Endothelial cell of umbilical vein (primary cell): ENCODE measurements at regions of chr14 and their contacts with region 1.

Region 1: DNA sequence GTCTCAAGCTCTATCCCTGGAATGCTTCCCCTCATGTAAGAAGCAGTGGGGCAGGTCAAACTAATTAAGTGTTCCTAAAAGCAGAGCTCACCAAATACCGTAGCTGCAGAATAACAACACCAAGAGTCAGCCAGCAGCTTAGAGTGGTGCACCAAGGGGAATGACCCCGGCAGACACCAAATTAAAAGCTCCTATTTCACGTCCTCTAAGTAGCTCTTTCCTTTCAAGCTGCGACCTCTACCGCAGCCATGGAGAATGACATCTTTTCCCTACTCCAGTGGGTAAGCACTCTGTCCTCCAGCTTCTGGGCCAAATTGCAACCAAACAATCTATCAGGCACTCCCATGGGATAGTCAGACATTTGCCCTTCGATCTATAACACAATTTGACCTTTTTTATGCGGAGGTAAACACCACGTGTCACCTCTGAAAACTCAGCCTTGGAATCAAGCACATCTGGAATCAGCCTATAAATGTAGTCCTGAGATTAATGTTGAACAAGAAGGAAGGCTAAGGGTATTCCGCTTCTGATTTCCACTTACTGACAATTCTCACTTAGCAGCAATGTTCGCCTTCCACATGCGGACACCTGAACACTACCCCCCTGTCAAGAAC is 67.6 kb upstream of the CDKN3 start:
- DNase-seq: peak; percentile 81
- H3K4me3 ChIP-seq: no peak overlapping the region
- H3K27ac ChIP-seq: peak overlapping the region; percentile 24
- H3K4me1 ChIP-seq: peaks cover 55% of the 10 kb centered on the region
- H3K27me3 ChIP-seq: no peaks in the 10 kb centered on the region
- CTCF ChIP-seq: peak; percentile 72 to 74
- POLR2A ChIP-seq: no peak

Region 2: DNA sequence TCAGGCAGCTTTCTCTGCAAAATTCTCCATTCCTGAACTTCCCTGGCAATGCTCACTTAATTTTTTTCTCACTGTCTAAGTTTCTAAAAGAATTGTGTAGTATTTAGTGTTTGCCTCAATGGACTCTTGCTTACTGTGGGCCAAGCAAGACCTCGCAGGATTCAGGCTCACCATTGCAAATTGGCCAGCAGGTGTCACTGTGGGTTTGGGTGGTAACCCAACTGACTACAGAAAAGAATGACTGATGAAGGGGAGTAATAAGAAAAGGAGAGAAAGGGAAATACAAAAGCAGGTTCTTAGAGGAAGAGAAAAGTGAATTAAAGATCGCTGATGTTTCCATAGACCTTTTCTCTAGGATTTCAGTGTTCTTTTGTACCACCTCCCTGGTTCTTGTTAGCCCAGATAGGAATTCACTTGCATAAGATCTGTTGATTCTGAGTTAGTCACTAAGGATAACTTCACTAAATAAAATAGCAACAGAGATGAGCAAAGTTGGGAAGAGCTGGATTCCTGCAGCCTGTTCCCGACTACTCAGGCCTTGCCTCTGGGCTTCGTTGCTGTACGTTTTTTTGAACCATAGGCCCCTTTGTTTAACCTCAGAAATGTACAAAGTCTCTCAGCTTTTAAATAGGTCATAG is 789.6 kb before region 1 on chr14:
- CTCF ChIA-PET with region 1: interaction called, 30 read pairs
- POLR2A ChIA-PET with region 1: no interaction called
- dilution Hi-C with region 1: loop called (anchors 25 kb)
- intact Hi-C with region 1: loop called (anchors 1 kb)
- DNase-seq: peak; percentile 94
- H3K4me3 ChIP-seq: no peak overlapping the region
- H3K27ac ChIP-seq: no peak overlapping the region
- H3K4me1 ChIP-seq: peaks cover 43% of the 10 kb centered on the region
- H3K27me3 ChIP-seq: no peaks in the 10 kb centered on the region
- CTCF ChIP-seq: peak; percentile 74 to 82
- POLR2A ChIP-seq: no peak

Region 3: DNA sequence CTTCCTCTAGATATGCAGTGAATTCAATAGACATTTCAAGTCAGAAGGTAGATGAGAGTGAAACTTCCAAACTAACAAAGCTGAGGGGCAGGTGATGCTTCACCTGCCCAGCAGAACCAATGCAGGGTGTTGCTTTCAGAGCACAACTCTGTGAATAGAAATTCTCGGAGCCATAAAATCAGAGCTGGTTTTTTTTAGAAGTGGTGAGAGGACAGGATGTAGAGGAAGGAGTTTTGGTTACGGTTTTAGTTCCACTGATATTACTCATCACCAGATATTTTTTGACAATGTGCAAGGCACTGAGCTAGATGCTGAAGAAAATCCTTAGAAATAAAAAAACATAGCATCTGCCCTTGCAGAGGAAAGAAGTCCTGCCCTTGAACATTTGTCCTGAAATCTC is 434.7 kb before region 1 on chr14:
- CTCF ChIA-PET with region 1: interaction called, 6 read pairs
- POLR2A ChIA-PET with region 1: no interaction called
- dilution Hi-C with region 1: no loop called
- intact Hi-C with region 1: loop called (anchors 1 kb)
- DNase-seq: peak; percentile 55
- H3K4me3 ChIP-seq: no peak overlapping the region
- H3K27ac ChIP-seq: peak overlapping the region; percentile 52
- H3K4me1 ChIP-seq: peaks cover 37% of the 10 kb centered on the region
- H3K27me3 ChIP-seq: no peaks in the 10 kb centered on the region
- CTCF ChIP-seq: no peak
- POLR2A ChIP-seq: no peak

Region 4: DNA sequence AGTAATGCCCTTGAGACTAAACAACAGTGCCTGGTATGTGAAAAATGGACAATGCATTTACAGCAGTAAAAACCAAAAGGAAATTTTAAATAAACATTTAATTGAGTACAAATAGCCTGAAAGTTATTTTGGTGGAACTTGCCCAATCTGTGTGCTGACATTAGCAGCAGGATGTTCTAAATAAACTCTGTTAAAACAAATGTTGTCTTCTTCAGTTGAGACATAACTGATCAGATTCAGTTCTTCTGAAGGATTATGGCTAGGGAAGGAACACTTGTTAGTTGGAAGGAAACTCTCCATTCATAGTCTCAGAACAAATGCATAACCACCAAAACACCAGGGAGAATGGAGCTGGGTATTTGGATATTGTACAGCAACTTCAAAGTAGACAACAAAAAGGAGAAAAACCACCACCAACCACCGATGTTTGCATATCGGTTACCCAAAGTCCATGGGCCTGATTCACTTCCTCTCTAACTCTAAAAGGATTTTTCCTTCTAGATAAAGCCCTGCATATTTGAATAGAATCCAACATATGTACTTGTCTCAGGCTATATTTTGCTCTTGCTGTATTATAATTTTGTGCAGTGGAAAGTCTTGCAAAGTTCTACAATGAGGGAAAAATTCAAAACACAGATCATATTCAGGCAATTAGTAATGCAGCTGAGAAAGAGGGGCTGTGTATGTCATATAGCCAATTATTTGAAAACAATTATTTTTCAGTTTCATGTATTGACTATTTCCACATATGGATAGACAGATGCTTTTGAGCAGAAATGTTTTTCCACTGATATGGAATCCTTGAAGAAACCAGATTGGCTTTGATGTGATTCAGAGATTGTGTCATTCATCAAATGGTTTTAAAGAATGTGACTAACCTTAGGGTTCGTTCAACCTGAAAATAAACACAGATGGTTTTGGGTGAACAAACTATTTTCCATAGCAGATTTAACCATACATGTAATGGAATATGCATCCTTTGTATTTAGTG is 220.4 kb before region 1 on chr14:
- CTCF ChIA-PET with region 1: interaction called, 5 read pairs
- POLR2A ChIA-PET with region 1: no interaction called
- dilution Hi-C with region 1: no loop called
- intact Hi-C with region 1: loop called (anchors 2 kb)
- DNase-seq: peak; percentile 94
- H3K4me3 ChIP-seq: peak overlapping the region in 1 of 3 experiments; percentile 17
- H3K27ac ChIP-seq: peak overlapping the region; percentile 96
- H3K4me1 ChIP-seq: peaks cover 44% of the 10 kb centered on the region
- H3K27me3 ChIP-seq: no peaks in the 10 kb centered on the region
- CTCF ChIP-seq: no peak
- POLR2A ChIP-seq: no peak

Region 5: DNA sequence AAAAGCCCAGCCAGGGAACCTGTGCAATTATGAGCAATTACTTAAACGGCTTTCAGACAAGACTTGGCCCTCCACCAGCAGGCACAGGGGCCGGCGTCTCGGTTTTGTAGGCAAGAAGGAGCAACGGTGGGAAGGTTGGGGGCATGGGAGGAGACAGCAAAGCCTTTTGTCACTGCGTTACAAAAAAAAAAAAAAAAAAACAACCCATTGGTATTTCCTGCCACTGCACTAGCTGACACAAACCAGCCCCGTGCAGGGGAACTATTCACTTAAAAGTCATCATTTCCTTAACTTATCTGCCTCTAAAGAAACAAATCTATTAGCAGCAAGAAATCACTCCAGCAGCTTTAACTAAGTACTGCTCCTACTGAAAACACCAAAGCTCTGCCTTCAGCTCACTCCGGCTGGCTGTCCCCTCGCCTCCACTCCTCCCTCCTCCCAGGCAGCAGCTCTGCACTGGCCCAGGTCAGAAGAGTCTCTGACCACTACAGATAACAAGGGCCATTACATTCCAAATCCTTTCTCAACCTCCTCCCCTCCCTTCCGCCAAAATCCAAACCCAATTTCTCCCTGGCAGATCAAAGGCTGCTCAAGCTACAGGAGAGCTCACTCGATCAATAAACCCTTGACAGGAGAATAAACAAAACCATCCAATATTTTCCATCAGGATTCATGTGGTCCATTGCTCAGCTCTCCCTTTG is 37.5 kb before region 1 on chr14:
- CTCF ChIA-PET with region 1: interaction called, 19 read pairs
- POLR2A ChIA-PET with region 1: no interaction called
- dilution Hi-C with region 1: no loop called
- intact Hi-C with region 1: no loop called
- DNase-seq: peak; percentile 41
- H3K4me3 ChIP-seq: no peak overlapping the region
- H3K27ac ChIP-seq: no peak overlapping the region
- H3K4me1 ChIP-seq: peaks cover 11% of the 10 kb centered on the region
- H3K27me3 ChIP-seq: no peaks in the 10 kb centered on the region
- CTCF ChIP-seq: no peak
- POLR2A ChIP-seq: no peak